ENCODE measurements at regions of chr11 and their contacts with region 1.

Region 1: GRCh38 chr11:14480716-14481115 is 18.9 kb downstream of the COPB1 start:
- DNase-seq: no peak
- H3K4me3 Mint-ChIP-seq: no peak overlapping the region
- H3K27ac Mint-ChIP-seq: peak overlapping the region; percentile 31
- H3K4me1 Mint-ChIP-seq: peaks cover 14% of the 10 kb centered on the region
- H3K27me3 Mint-ChIP-seq: no peaks in the 10 kb centered on the region

Region 2: DNA sequence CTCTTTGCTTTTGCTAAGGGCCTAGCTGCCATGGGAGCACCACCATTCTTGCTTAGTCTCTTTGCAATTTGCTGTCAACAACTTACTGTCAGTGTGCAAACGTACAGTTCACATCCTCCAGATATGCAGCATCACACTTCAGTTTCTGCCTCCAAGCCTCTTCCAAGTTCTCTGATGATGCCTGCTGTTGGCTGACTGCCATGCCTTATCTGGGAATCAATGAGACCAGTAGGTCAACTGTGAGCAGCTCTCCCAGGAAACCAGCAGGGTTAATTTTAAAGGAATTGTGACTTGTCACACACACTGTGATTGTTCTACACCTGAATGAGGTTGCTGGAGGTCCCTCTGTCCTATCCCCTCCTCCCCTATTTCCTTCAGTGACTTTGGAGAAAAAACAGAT is 37.1 kb before region 1 on chr11:
- intact Hi-C with region 1: no loop called
- DNase-seq: no peak
- H3K4me3 Mint-ChIP-seq: no peak overlapping the region
- H3K27ac Mint-ChIP-seq: no peak overlapping the region
- H3K4me1 Mint-ChIP-seq: peaks cover 37% of the 10 kb centered on the region
- H3K27me3 Mint-ChIP-seq: no peaks in the 10 kb centered on the region

Region 3: DNA sequence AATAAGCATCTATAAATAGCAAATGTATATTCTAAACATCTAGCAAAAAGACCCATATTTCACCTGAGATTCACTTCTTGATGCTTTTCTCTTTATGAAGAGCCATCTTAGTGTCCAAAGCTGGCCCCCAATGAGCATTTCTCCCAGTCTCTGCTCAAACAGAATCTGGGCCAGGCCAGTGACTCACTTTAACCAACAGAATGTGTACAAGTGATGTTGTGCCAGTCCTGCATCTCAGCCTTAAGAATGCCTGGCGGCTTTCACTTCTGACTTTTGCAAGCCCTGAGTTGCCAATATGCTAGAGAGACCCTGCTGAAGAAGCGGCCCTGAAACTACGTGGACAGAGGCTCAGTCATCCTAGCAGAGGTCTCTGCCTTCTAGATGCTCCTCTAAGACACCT is 25.8 kb after region 1 on chr11:
- intact Hi-C with region 1: loop called (anchors 2 kb)
- DNase-seq: no peak
- H3K4me3 Mint-ChIP-seq: no peak overlapping the region
- H3K27ac Mint-ChIP-seq: peak overlapping the region; percentile 6
- H3K4me1 Mint-ChIP-seq: peaks cover 14% of the 10 kb centered on the region
- H3K27me3 Mint-ChIP-seq: no peaks in the 10 kb centered on the region

Measured in activated T-helper 2 cell treated with anti-CD3 and anti-CD28 coated beads, Interferon-gamma antibody, Interleukin-2, Interleukin-4, amounts not matched to agents 10 μg/mL and 5 μg/mL and 100 μg/mL, durations not matched to agents 14 hours and 24 hours and 36 hours (primary cell).